Activated T-helper 2 cell treated with anti-CD3 and anti-CD28 coated beads, Interferon-gamma antibody, Interleukin-2, Interleukin-4, amounts not matched to agents 10 μg/mL and 5 μg/mL and 100 μg/mL, durations not matched to agents 14 hours and 24 hours and 36 hours (primary cell): ENCODE measurements at regions of chr10 and their contacts with region 1.

Region 1: GRCh38 chr10:86688398-86688921 is 20.1 kb downstream of the LDB3 start:
- DNase-seq: peak; percentile 29
- H3K4me3 Mint-ChIP-seq: no peak overlapping the region
- H3K27ac Mint-ChIP-seq: no peak overlapping the region
- H3K4me1 Mint-ChIP-seq: no peaks in the 10 kb centered on the region
- H3K27me3 Mint-ChIP-seq: no peaks in the 10 kb centered on the region

Region 2: GRCh38 chr10:86813101-86813500 is 124.6 kb after region 1 on chr10:
- intact Hi-C with region 1: no loop called
- DNase-seq: no peak
- H3K4me3 Mint-ChIP-seq: no peak overlapping the region
- H3K27ac Mint-ChIP-seq: no peak overlapping the region
- H3K4me1 Mint-ChIP-seq: no peaks in the 10 kb centered on the region
- H3K27me3 Mint-ChIP-seq: no peaks in the 10 kb centered on the region

Region 3: DNA sequence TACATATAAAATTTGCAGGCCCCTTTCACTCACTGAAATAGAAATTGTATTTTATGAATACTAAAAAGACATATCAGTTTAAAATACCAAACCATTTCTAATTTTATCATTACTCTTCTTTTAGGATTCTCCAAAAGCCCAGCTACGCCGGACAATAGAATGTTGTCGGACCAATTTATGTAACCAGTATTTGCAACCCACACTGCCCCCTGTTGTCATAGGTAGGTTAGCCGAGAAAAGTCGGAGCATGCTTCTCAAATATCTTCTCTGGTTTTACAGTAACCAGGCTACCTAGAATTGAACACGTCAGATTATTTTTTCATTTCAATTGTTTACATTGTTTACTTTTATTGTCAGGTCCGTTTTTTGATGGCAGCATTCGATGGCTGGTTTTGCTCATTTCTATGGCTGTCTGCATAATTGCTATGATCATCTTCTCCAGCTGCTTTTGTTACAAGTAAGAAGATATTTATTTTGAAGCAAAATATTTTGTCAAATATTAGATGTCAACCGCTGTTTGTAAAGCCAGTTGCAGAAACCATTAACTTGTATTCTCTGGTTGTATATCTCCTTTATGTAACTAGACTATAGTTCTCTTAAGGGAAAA is 211.3 kb after region 1 on chr10:
- intact Hi-C with region 1: loop called (anchors 1 kb)
- DNase-seq: no peak
- H3K4me3 Mint-ChIP-seq: no peak overlapping the region
- H3K27ac Mint-ChIP-seq: no peak overlapping the region
- H3K4me1 Mint-ChIP-seq: peaks cover 2% of the 10 kb centered on the region
- H3K27me3 Mint-ChIP-seq: no peaks in the 10 kb centered on the region